Spleen (tissue), 13 donors: ENCODE measurements at regions of chr1 and their contacts with region 1.

Region 1: GRCh38 chr1:87953732-87954344 is 625.2 kb downstream of the LMO4 start:
- DNase-seq: no peak
- H3K4me3 ChIP-seq: no peak overlapping the region
- H3K27ac ChIP-seq: no peak overlapping the region
- H3K4me1 ChIP-seq: peaks cover 0 to 15% (median 12%) of the 10 kb centered on the region in 6 donors
- H3K27me3 ChIP-seq: no peaks in the 10 kb centered on the region
- CTCF ChIP-seq: peak; percentile 61 to 90 (median 79)
- POLR2A ChIP-seq: no peak

Region 2: DNA sequence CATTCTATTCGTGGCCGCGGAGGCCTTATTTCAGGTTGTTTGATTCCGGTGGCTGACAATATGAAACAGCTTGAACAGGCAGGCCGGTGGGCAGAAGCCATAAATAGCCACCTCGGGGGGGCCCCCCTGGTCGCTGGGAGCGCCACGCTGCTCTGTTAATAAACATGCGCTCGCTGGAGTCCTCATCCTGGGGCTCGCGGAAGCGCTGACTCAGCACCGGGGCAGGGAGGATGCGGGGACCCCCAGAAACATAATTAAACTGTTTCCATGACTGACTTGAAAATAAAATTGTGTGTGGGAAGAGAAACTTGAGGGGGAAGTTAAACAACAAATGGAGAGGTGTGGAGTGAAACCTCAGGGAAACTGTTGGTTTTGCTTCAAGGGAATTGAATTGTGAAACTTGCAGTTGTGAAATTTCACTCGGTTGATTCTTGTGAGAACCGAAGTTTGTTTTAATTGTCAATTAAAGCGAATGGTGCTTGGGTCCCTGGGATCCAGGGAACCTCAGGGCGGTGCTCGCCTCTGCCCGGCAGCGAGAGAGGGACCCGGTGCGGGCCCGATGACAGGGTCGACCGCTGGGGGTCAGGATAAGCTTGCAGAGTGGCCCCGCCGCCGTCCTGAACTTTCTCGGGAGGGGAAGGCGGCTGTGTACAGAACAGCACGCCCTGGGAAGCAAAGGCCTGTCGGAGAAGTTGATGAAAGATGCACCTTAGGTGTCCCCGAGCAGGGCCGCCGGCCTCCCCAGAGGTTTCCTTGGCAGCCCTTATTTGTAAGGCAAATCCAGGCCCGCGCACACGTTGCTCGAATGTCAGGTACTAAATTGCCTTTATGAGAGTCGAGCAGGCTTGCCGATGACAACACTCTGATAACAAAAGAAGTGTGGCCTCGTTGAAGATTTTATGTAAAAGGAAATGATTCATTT is 802.1 kb before region 1 on chr1:
- intact Hi-C with region 1: loop called (anchors 5 kb)
- DNase-seq: peak; percentile 88
- H3K4me3 ChIP-seq: peak overlapping the region; percentile 1 to 62 (median 32)
- H3K27ac ChIP-seq: peak overlapping the region in 4 of 8 donors; percentile 19 to 38 (median 28)
- H3K4me1 ChIP-seq: peaks cover 0 to 39% (median 19%) of the 10 kb centered on the region in 6 donors
- H3K27me3 ChIP-seq: peaks cover 0 to 33% (median 5%) of the 10 kb centered on the region in 7 donors
- CTCF ChIP-seq: peak in 9 of 11 experiments; percentile 33 to 65 (median 51)
- POLR2A ChIP-seq: no peak

Region 3: GRCh38 chr1:87292684-87293493 is 660.9 kb before region 1 on chr1:
- intact Hi-C with region 1: loop called (anchors 5 kb)
- DNase-seq: no peak
- H3K4me3 ChIP-seq: no peak overlapping the region
- H3K27ac ChIP-seq: no peak overlapping the region
- H3K4me1 ChIP-seq: peaks cover 0 to 4% (median 0%) of the 10 kb centered on the region in 6 donors
- H3K27me3 ChIP-seq: no peaks in the 10 kb centered on the region
- CTCF ChIP-seq: peak in 10 of 11 experiments; percentile 20 to 80 (median 68)
- POLR2A ChIP-seq: no peak

Region 4: DNA sequence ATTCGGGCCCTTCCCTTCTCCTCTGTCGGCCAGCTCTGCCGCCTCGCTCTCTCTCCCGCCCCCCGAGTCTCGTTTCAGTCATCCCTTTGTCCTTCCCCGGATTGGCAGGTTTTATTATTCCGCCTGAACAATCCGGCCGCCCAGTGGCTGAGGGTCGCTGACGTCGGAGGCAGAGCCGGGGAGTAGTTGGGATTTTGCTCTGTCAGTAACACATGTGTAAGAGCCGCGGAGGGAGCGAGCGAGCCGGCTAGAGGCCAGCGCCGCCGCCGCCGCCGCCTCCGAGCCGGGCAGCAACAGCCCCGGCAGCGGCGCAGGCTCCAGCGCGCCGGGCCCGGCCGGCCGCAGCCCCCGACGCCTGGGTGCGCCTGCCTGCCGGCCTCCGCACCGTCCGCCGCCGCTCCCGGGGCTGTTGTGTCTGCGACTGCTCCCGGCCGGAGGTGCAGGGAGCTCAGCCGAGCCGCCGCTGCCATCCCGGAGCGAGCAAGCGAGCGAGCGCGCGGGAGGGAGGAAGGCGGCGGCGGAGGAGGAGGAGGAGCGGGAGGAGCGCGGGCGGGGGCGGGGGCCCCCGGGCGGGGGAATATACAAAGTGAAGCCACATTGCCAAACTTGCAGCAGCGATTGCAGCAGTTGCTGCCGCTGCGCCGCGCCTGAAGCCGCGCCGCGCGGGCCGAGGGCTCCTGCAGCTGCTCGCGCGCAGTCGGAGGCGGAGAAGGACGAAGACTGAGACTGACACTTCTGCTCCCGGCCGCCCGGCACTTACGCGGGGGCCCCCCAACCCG is 625.4 kb before region 1 on chr1 and contains the start of gene LMO4:
- intact Hi-C with region 1: loop called (anchors 10 kb)
- DNase-seq: peak; percentile 97
- H3K4me3 ChIP-seq: peak within 1 kb of the TSS; percentile 58 to 91 (median 74)
- H3K27ac ChIP-seq: peak within 1 kb of the TSS; percentile 94 to 98 (median 96)
- H3K4me1 ChIP-seq: peaks cover 11 to 56% (median 40%) of the 10 kb centered on the region in 6 donors
- H3K27me3 ChIP-seq: no peaks in the 10 kb centered on the region
- CTCF ChIP-seq: peak in 2 of 11 experiments; percentile 4 to 8
- POLR2A ChIP-seq: peak; percentile 72 to 94 (median 80)
- total RNA-seq, gene LMO4: 31.2 to 63.0 (median 45.8) TPM

Region 5: GRCh38 chr1:89041119-89041641 is 1087.3 kb after region 1 on chr1:
- intact Hi-C with region 1: no loop called
- DNase-seq: no peak
- H3K4me3 ChIP-seq: no peak overlapping the region
- H3K27ac ChIP-seq: no peak overlapping the region
- H3K4me1 ChIP-seq: peaks cover 0 to 7% (median 0%) of the 10 kb centered on the region in 6 donors
- H3K27me3 ChIP-seq: no peaks in the 10 kb centered on the region
- CTCF ChIP-seq: no peak
- POLR2A ChIP-seq: no peak